ENCODE measurements at regions of chr13 and their contacts with region 1.

Region 1: DNA sequence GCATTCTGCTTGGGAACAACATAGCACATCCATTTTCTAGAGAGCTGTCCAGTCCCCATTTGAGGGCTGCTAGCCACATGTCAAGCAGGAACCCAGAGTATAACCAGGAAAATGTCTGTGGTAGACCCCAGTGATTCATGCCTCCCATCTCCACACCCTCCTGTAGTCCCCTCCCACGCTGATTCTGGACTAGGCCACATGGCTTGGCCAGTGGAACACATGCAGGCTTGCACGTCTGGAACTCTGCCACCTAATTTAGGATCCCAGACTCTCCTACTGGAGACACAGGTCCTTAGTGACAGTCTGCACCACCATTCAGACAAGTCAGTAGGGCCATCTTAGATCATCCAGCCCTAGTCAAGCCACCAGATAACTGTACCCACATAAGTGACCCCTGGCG is 149.8 kb downstream of the ZIC5 start:
- DNase-seq: no peak
- H3K4me3 Mint-ChIP-seq: no peak overlapping the region
- H3K27ac Mint-ChIP-seq: no peak overlapping the region
- H3K4me1 Mint-ChIP-seq: peaks cover 16% of the 10 kb centered on the region
- H3K27me3 Mint-ChIP-seq: no peaks in the 10 kb centered on the region

Region 2: GRCh38 chr13:99542788-99543406 is 278.8 kb before region 1 on chr13:
- CTCF ChIA-PET with region 1: no interaction called
- intact Hi-C with region 1: loop called (anchors 2 kb)
- DNase-seq: peak; percentile 80
- H3K4me3 Mint-ChIP-seq: no peak overlapping the region
- H3K27ac Mint-ChIP-seq: no peak overlapping the region
- H3K4me1 Mint-ChIP-seq: peaks cover 47% of the 10 kb centered on the region
- H3K27me3 Mint-ChIP-seq: no peaks in the 10 kb centered on the region

Region 3: DNA sequence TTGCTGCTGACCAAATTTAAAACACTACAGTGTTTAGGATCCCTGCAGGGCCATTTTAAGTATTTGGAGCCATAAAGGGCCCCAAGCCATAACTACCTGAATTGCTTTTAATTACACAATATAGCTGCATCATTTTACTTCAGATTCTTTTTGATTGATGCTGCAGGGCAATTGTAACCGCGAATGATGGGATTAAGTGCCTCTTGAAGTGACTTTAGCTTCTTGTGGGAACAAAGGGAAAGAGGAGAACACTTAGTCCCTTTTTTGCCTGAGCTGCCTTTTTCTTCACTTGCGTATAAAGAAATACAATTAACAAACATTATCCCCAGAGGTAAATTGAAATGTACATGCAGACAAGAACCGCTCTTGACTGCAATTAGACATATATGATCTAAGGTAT is 78.6 kb before region 1 on chr13:
- CTCF ChIA-PET with region 1: no interaction called
- intact Hi-C with region 1: no loop called
- DNase-seq: no peak
- H3K4me3 Mint-ChIP-seq: no peak overlapping the region
- H3K27ac Mint-ChIP-seq: no peak overlapping the region
- H3K4me1 Mint-ChIP-seq: no peaks in the 10 kb centered on the region
- H3K27me3 Mint-ChIP-seq: no peaks in the 10 kb centered on the region